BJ (cell line): ENCODE measurements at regions of chr6 and their contacts with region 1.

Region 1: DNA sequence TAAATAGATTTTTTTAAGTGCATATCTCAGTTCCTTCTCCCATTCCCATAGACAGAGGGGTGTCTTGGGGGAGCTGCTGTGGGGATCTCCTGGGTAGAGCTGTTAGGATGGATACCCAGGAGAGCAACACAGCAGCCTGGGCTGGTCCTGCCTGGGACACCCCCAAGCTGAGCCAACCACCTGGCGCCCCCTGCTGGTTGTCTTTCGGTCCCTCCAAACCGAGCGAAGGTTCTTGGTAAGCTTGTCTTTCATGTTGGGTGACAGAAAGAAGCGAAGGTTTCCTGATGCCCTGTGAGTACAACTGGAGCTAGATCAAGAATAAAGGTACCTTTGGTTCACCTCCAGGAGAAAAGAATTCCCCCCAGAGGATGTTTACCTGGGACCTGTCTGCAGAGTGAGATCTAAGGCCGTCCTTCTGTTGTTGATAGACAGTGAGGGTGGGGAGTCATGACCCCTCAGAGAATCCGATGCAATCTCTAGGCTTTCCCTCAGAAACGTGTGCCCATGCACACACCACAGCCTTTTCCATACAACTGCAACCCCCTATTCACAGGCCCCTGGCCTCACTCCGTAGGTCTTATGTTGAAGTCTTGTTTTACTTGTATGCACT is 50.8 kb downstream of the SNX9 start:
- DNase-seq: no peak
- H3K4me3 ChIP-seq: no peak overlapping the region
- H3K27me3 ChIP-seq: no peaks in the 10 kb centered on the region
- CTCF ChIP-seq: peak; percentile 86

Region 2: DNA sequence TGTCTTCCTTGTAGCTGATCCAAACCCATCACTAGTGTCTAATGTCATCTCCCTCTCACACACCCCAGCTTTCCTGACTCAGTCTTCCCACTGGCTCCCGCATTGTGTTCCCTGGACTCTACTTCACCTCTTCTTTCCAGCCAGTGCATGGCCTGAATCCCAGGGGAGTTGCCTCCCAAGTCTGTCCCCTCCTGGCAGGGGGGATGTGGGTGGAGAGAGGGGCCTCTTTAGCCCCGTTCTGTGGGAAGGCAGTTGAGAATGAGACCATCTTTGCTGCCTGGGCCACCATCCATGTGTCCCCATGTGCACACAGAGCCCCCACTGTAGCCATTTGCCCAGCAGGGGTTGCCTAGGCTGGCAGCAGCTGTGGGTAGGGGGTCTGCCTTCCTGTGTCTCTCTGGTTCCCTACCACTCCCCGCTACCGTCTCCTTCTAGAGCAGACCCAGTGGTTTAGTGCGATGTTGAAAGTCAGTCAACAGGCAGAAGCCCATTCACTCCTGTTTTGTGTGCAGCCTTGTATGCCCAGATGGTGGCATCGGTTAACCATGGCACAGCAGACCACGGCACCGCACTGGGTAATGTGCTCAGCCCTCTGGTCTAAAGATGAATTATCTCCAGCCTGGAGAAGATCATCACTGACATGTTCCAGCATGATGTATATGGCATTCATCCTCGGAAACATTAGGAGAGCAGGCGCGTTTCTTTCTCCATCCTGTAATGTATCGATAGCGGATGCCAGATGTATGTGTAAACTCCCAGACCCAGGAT is 229.6 kb before region 1 on chr6:
- CTCF ChIA-PET with region 1: interaction called, 12 read pairs
- POLR2A ChIA-PET with region 1: no interaction called
- DNase-seq: no peak
- H3K4me3 ChIP-seq: no peak overlapping the region
- H3K27me3 ChIP-seq: no peaks in the 10 kb centered on the region
- CTCF ChIP-seq: peak; percentile 68

Region 3: GRCh38 chr6:157732021-157732417 is 141.8 kb before region 1 on chr6:
- CTCF ChIA-PET with region 1: no interaction called
- POLR2A ChIA-PET with region 1: no interaction called
- DNase-seq: no peak
- H3K4me3 ChIP-seq: no peak overlapping the region
- H3K27me3 ChIP-seq: peaks cover 4% of the 10 kb centered on the region
- CTCF ChIP-seq: no peak

Region 4: DNA sequence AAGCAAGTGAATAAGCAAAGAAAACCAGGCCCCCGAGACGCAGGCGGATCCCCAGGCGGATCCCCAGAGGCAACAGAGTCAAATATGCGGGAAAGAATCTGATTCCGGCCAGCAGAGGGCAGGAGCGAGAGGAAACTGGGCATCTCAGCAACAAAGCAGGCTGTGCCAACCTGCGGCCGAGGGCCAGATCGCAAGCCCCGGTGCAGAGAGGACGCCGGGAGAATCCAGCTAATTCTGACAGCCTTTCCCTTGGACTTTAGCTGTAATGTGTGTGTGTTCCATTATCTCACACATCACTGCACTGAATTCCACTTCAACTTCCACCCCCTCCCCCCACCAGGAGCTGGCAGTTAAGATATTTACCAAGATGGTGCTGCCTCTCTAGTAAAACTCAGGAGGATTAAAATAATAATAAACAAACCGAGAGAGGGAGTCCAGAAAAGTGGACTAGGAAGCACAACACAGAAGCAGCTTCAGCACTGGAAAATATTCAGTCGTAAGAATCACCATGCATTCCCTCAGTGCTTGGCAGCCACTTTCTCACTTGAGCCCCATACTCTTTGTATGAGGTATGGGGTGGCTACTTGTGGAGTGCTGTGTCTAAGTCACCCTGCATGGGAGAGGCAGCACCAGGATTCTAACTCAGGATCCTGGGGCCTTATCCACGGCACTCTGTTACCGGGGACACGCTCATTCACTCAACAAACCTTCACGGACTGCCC is 117.0 kb before region 1 on chr6:
- CTCF ChIA-PET with region 1: interaction called, 30 read pairs
- POLR2A ChIA-PET with region 1: no interaction called
- DNase-seq: peak; percentile 17
- H3K4me3 ChIP-seq: no peak overlapping the region
- H3K27me3 ChIP-seq: no peaks in the 10 kb centered on the region
- CTCF ChIP-seq: peak; percentile 80